H1 (cell line): ENCODE measurements at regions of chr6 and their contacts with region 1.

Region 1: GRCh38 chr6:45930420-45931040 is 85.1 kb downstream of the CLIC5 start:
- DNase-seq: peak in 1 of 2 experiments; percentile 83
- H3K4me3 ChIP-seq: no peak overlapping the region
- H3K27ac ChIP-seq: no peak overlapping the region
- H3K4me1 ChIP-seq: peaks cover 10 to 28% (median 20%) of the 10 kb centered on the region in 4 experiments
- H3K27me3 ChIP-seq: peaks cover 0 to 8% (median 3%) of the 10 kb centered on the region in 4 experiments; a peak in 3 of 7 replicates
- CTCF ChIP-seq: peak; percentile 76 to 96 (median 94)
- EP300 ChIP-seq: no peak
- POLR2A ChIP-seq: no peak
- RAD21 ChIP-seq: peak; percentile 78 to 83

Region 2: DNA sequence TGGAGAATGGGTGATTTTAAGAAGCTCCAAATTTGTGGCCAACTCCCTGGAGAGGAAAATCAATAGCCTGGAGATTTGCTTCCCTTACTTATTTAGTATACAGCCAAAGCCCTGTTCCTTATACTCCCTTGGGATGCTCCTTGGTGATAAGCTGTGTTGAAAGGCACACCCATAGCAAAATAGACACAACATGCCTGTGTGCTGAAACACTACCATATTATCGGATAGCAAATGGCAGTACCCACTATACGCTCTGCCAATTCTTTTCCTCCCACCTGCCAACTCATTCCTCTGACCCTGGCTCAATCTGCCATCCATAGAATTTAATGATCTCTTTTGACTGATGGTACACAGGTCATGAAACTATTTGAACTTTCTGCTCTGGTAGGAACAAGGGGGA is 13.1 kb before region 1 on chr6:
- CTCF ChIA-PET with region 1: interaction called, 13 read pairs
- POLR2A ChIA-PET with region 1: no interaction called
- DNase-seq: peak in 1 of 2 experiments; percentile 14
- H3K4me3 ChIP-seq: no peak overlapping the region
- H3K27ac ChIP-seq: no peak overlapping the region
- H3K4me1 ChIP-seq: peaks cover 0 to 7% (median 0%) of the 10 kb centered on the region in 4 experiments; a peak in 1 of 7 replicates
- H3K27me3 ChIP-seq: no peaks in the 10 kb centered on the region; a peak in 3 of 7 replicates
- CTCF ChIP-seq: no peak
- EP300 ChIP-seq: no peak
- POLR2A ChIP-seq: no peak
- RAD21 ChIP-seq: no peak

Region 3: GRCh38 chr6:45942953-45943352 is 12.4 kb after region 1 on chr6:
- CTCF ChIA-PET with region 1: interaction called, 22 read pairs
- POLR2A ChIA-PET with region 1: no interaction called
- DNase-seq: no peak
- H3K4me3 ChIP-seq: no peak overlapping the region
- H3K27ac ChIP-seq: no peak overlapping the region
- H3K4me1 ChIP-seq: no peaks in the 10 kb centered on the region
- H3K27me3 ChIP-seq: peaks cover 0 to 1% (median 0%) of the 10 kb centered on the region in 4 experiments; a peak in 1 of 7 replicates
- CTCF ChIP-seq: no peak
- EP300 ChIP-seq: no peak
- POLR2A ChIP-seq: no peak
- RAD21 ChIP-seq: no peak

Region 4: GRCh38 chr6:45949256-45949655 is 18.7 kb after region 1 on chr6:
- CTCF ChIA-PET with region 1: interaction called, 22 read pairs
- POLR2A ChIA-PET with region 1: no interaction called
- DNase-seq: no peak
- H3K4me3 ChIP-seq: no peak overlapping the region
- H3K27ac ChIP-seq: no peak overlapping the region
- H3K4me1 ChIP-seq: no peaks in the 10 kb centered on the region
- H3K27me3 ChIP-seq: no peaks in the 10 kb centered on the region
- CTCF ChIP-seq: no peak
- EP300 ChIP-seq: no peak
- POLR2A ChIP-seq: no peak
- RAD21 ChIP-seq: no peak